Naive thymus-derived CD4-positive, alpha-beta T cell (primary cell): ENCODE measurements at regions of chr10 and their contacts with region 1.

Region 1: GRCh38 chr10:133139551-133140065 is 20.4 kb upstream of the KNDC1 start:
- DNase-seq: no peak
- ATAC-seq: no peak
- H3K4me3 ChIP-seq: no peak overlapping the region
- H3K4me3 Mint-ChIP-seq: no peak overlapping the region
- H3K27ac ChIP-seq: no peak overlapping the region
- H3K27ac Mint-ChIP-seq: no peak overlapping the region
- H3K4me1 ChIP-seq: no peaks in the 10 kb centered on the region
- H3K4me1 Mint-ChIP-seq: peaks cover 4 to 10% (median 6%) of the 10 kb centered on the region in 7 donors
- H3K27me3 ChIP-seq: no peaks in the 10 kb centered on the region
- H3K27me3 Mint-ChIP-seq: peaks cover 0 to 13% (median 12%) of the 10 kb centered on the region in 5 donors

Region 2: DNA sequence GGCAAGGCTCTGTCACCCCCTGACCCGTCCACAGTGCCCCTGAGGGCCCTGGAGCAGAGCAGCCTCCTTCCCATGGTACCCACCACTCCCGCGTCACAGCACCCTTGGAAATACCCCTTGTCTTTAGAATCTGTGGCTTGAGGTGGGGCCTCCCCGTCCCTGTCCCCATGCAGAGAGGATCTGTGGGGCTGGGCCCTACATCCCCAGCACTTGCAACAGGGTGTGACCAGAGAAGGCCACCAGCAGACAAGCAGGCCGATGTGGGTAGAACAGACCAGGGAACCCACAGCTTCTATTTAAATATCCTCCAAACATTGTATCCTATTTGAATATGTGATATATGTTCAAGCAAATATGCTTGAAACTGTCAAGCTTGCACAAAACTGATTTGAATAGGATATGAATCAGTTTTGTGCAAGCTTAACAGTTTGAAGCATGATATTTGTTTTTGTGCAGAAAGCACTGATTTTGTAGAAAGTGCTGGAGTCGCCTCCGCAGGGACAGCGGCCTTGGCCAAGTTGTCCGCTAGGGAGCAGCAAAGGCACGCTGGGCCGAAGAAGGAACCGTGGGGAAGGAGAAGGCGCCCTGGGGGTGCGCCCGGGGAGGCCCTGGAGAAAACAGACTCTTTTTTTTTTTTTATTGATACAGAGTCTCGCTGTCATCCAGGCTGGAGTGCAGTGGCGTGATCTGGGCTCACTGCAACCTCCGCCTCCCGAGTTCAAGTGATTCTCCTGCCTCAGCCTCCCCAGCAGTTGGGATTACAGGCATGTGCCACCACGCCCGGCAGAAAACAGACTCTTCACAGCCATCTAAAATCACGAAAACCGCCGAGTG is 199.4 kb before region 1 on chr10:
- CTCF ChIA-PET with region 1: no interaction called
- POLR2A ChIA-PET with region 1: no interaction called
- intact Hi-C with region 1: loop called in 1 of 2 experiments (anchors 5 kb)
- DNase-seq: peak in 1 of 9 donors; percentile 43
- ATAC-seq: peak; percentile 49
- H3K4me3 ChIP-seq: no peak overlapping the region
- H3K4me3 Mint-ChIP-seq: peak overlapping the region in 3 of 10 donors; percentile 45 to 53 (median 47)
- H3K27ac ChIP-seq: no peak overlapping the region
- H3K27ac Mint-ChIP-seq: no peak overlapping the region
- H3K4me1 ChIP-seq: no peaks in the 10 kb centered on the region
- H3K4me1 Mint-ChIP-seq: peaks cover 0 to 10% (median 5%) of the 10 kb centered on the region in 7 donors
- H3K27me3 ChIP-seq: no peaks in the 10 kb centered on the region
- H3K27me3 Mint-ChIP-seq: peaks cover 41 to 60% (median 51%) of the 10 kb centered on the region in 5 donors

Region 3: GRCh38 chr10:132961787-132962622 is 177.6 kb before region 1 on chr10:
- CTCF ChIA-PET with region 1: no interaction called
- POLR2A ChIA-PET with region 1: no interaction called
- intact Hi-C with region 1: no loop called
- DNase-seq: peak in 8 of 9 donors; percentile 31 to 72 (median 60)
- ATAC-seq: peak; percentile 68
- H3K4me3 ChIP-seq: peak overlapping the region; percentile 64
- H3K4me3 Mint-ChIP-seq: peak overlapping the region; percentile 87 to 99 (median 94)
- H3K27ac ChIP-seq: peak overlapping the region; percentile 33
- H3K27ac Mint-ChIP-seq: peak overlapping the region in 8 of 9 donors; percentile 2 to 84 (median 63)
- H3K4me1 ChIP-seq: peaks cover 0 to 3% of the 10 kb centered on the region in 2 donors
- H3K4me1 Mint-ChIP-seq: peaks cover 7 to 27% (median 17%) of the 10 kb centered on the region in 7 donors
- H3K27me3 ChIP-seq: no peaks in the 10 kb centered on the region
- H3K27me3 Mint-ChIP-seq: peaks cover 5 to 29% (median 18%) of the 10 kb centered on the region in 5 donors

Region 4: GRCh38 chr10:133230387-133231195 is 91.0 kb after region 1 on chr10:
- CTCF ChIA-PET with region 1: no interaction called
- POLR2A ChIA-PET with region 1: no interaction called
- intact Hi-C with region 1: loop called in 1 of 2 experiments (anchors 10 kb)
- DNase-seq: peak in 1 of 9 donors; percentile 7
- ATAC-seq: peak; percentile 28
- H3K4me3 ChIP-seq: no peak overlapping the region
- H3K4me3 Mint-ChIP-seq: peak overlapping the region in 4 of 10 donors; percentile 29 to 67 (median 42)
- H3K27ac ChIP-seq: no peak overlapping the region
- H3K27ac Mint-ChIP-seq: no peak overlapping the region
- H3K4me1 ChIP-seq: no peaks in the 10 kb centered on the region
- H3K4me1 Mint-ChIP-seq: peaks cover 0 to 18% (median 8%) of the 10 kb centered on the region in 7 donors
- H3K27me3 ChIP-seq: peaks cover 3 to 12% of the 10 kb centered on the region in 2 donors
- H3K27me3 Mint-ChIP-seq: peaks cover 31 to 73% (median 53%) of the 10 kb centered on the region in 5 donors